Lower leg skin (tissue), 4 donors: ENCODE measurements at regions of chr4 and their contacts with region 1.

Region 1: DNA sequence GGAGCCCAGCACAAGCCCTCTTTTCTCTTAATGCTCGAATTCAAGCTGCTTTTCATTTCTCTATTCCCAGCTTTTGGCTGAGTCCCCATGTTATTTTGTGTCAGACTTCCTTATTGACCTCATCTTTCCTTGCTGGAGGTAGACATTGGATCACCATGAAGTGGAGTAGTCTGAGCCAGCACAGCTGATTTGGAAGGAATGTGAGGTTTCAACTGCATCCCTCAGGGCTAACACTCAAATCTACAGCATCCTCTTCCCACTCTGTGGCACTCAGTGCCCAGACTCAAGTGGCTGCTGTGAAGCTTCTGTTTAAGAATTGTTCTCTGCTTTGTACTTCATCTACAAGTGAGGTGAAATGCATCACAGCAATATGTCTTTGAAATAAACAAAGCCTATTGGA is 6.3 kb downstream of the TRAPPC11 start:
- DNase-seq: no peak
- H3K4me3 ChIP-seq: no peak overlapping the region
- CTCF ChIP-seq: no peak
- POLR2A ChIP-seq: no peak

Region 2: GRCh38 chr4:183966371-183966770 is 300.9 kb after region 1 on chr4:
- intact Hi-C with region 1: loop called (anchors 5 kb)
- DNase-seq: no peak
- H3K4me3 ChIP-seq: no peak overlapping the region
- CTCF ChIP-seq: no peak
- POLR2A ChIP-seq: no peak